Heart right ventricle (tissue), 16 donors: ENCODE measurements at regions of chr11 and their contacts with region 1.

Region 1: GRCh38 chr11:57345555-57346211 is 7.5 kb downstream of the P2RX3 start:
- DNase-seq: peak; percentile 42 to 74
- ATAC-seq: peak in 7 of 8 donors; percentile 49 to 75 (median 73)
- H3K4me3 ChIP-seq: no peak overlapping the region
- H3K27ac ChIP-seq: no peak overlapping the region
- H3K4me1 ChIP-seq: peaks cover 0 to 9% (median 4%) of the 10 kb centered on the region in 9 donors
- H3K27me3 ChIP-seq: peaks cover 0 to 7% (median 0%) of the 10 kb centered on the region in 7 donors
- CTCF ChIP-seq: peak; percentile 67 to 90 (median 87)

Region 2: GRCh38 chr11:57379732-57380131 is 34.0 kb after region 1 on chr11:
- intact Hi-C with region 1: no loop called
- DNase-seq: no peak
- ATAC-seq: no peak
- H3K4me3 ChIP-seq: no peak overlapping the region
- H3K27ac ChIP-seq: no peak overlapping the region
- H3K4me1 ChIP-seq: peaks cover 0 to 6% (median 0%) of the 10 kb centered on the region in 9 donors
- H3K27me3 ChIP-seq: peaks cover 0 to 10% (median 0%) of the 10 kb centered on the region in 7 donors
- CTCF ChIP-seq: no peak

Region 3: GRCh38 chr11:57406337-57406904 is 60.7 kb after region 1 on chr11:
- intact Hi-C with region 1: loop called in 1 of 10 experiments (anchors 5 kb)
- DNase-seq: peak; percentile 25 to 49
- ATAC-seq: peak; percentile 74 to 89 (median 79)
- H3K4me3 ChIP-seq: no peak overlapping the region
- H3K27ac ChIP-seq: peak overlapping the region in 9 of 10 donors; percentile 49 to 82 (median 73)
- H3K4me1 ChIP-seq: peaks cover 6 to 38% (median 30%) of the 10 kb centered on the region in 9 donors
- H3K27me3 ChIP-seq: no peaks in the 10 kb centered on the region
- CTCF ChIP-seq: no peak

Region 4: DNA sequence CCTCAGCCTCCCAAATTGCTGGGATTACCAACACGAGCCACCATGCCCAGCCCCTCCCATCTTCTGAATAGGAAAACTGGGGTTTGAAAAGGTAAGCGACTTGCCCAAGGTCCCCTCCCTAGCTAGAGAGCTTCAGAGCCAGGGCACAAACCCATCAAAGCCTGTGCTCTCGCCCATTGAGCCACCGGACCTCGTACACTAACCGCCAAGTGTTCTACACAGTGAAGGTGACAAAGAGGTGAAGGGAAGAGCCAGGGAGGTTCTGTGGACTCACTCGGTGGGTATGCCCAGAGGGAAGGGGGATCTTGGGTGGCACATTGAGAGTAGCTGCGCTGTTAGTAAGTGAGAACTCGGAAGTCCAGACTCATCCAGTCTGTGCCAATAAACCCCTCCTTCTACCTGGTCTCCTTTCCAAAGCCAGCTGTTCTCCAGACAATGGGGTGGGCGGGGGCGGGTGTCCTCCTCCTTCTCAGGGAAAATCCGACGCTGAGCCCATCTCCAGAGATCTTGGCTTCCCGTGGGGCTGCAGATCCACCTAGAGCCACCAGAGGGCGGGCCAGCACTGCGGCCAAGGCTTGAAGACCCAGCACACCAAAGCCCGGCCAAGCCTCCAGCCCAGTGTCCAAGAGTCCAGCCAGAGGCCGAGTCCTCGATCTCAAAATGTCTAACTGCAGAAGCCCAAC is 111.4 kb after region 1 on chr11:
- intact Hi-C with region 1: loop called in 6 of 10 experiments (anchors 5 to 10 kb)
- DNase-seq: peak; percentile 89 to 90
- ATAC-seq: peak; percentile 85 to 92 (median 87)
- H3K4me3 ChIP-seq: peak overlapping the region in 1 of 10 donors; percentile 16
- H3K27ac ChIP-seq: no peak overlapping the region
- H3K4me1 ChIP-seq: peaks cover 4 to 42% (median 35%) of the 10 kb centered on the region in 9 donors
- H3K27me3 ChIP-seq: peaks cover 13 to 52% (median 44%) of the 10 kb centered on the region in 7 donors
- CTCF ChIP-seq: peak; percentile 99

Region 5: GRCh38 chr11:57530596-57531507 is 185.2 kb after region 1 on chr11 and contains the start of gene TIMM10:
- intact Hi-C with region 1: loop called (anchors 5 to 10 kb)
- DNase-seq: peak; percentile 93 to 95
- ATAC-seq: peak; percentile 97 to 99 (median 98)
- H3K4me3 ChIP-seq: peak within 1 kb of the TSS; percentile 51 to 90 (median 74)
- H3K27ac ChIP-seq: peak within 1 kb of the TSS in 9 of 10 donors; percentile 30 to 86 (median 76)
- H3K4me1 ChIP-seq: peaks cover 0 to 23% (median 13%) of the 10 kb centered on the region in 9 donors
- H3K27me3 ChIP-seq: no peaks in the 10 kb centered on the region
- CTCF ChIP-seq: no peak
- total RNA-seq, gene TIMM10: 38.0 to 76.6 (median 51.5) TPM

Region 6: GRCh38 chr11:58524232-58525036 is 1178.8 kb after region 1 on chr11:
- intact Hi-C with region 1: loop called in 1 of 10 experiments (anchors 10 kb)
- DNase-seq: peak; percentile 46 to 60
- ATAC-seq: peak; percentile 67 to 89 (median 83)
- H3K4me3 ChIP-seq: peak overlapping the region in 4 of 10 donors; percentile 9 to 37 (median 28)
- H3K27ac ChIP-seq: peak overlapping the region in 2 of 10 donors; percentile 7 to 74
- H3K4me1 ChIP-seq: peaks cover 0 to 37% (median 7%) of the 10 kb centered on the region in 9 donors
- H3K27me3 ChIP-seq: no peaks in the 10 kb centered on the region
- CTCF ChIP-seq: peak; percentile 51 to 81 (median 76)